Posterior cingulate gyrus (tissue), 11 donors: ENCODE measurements at regions of chr5 and their contacts with region 1.

Region 1: GRCh38 chr5:43040287-43041098 is at the start of gene ANXA2R:
- DNase-seq: peak in 7 of 10 donors; percentile 52 to 94 (median 80)

Region 2: DNA sequence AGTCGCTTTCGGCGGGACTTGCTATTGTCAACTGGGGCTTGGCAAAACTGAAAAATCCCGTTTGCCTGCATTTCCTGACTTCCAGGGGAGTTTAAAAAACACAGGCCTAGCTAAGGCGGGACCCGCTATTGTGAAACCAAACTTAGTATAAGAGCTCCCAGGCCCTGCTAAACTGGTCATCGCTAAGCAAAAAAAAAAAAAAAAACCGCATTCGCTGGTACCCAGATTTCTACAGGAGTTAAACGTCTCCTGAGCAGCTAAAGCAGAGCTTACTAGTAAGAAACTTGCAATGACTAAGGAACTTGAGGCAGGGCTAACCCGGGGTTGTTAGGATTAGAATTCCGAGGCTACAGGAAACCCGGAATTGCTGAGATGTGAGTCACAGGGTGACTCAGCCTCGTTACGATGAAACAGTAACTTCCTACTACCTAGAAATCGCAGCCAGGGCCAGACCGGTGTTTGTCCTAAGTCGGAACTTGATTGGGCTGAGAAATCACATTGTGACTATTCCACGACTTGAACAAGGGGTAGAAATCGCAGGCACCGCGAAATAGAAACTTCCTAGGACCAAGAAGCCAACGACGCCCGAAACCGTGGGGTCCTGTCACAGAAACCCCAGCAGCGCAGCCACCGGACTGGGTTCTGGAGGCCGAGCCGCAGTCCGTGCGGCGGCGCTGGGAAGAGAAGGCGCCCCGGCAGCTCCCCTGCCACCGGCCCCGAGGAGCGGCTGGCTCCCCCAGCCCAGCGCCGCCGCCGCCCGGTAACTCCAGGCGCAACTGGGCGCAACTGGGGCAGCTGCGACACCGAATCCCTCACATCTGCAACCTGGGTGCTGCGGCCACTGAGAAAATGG is 89.8 kb before region 1 on chr5:
- intact Hi-C with region 1: loop called (anchors 5 kb)
- DNase-seq: peak in 1 of 10 donors; percentile 20